OCI-LY7 (cell line): ENCODE measurements at regions of chr3 and their contacts with region 1.

Region 1: GRCh38 chr3:169772897-169773828 is at the start of gene MYNN:
- DNase-seq: peak; percentile 93
- H3K4me3 ChIP-seq: peak within 1 kb of the TSS; percentile 84
- H3K27ac ChIP-seq: peak within 1 kb of the TSS; percentile 92
- H3K4me1 ChIP-seq: peaks cover 31% of the 10 kb centered on the region
- CTCF ChIP-seq: peak; percentile 50
- total RNA-seq, gene MYNN: 12.0 and 13.1 TPM in 2 replicates

Region 2: DNA sequence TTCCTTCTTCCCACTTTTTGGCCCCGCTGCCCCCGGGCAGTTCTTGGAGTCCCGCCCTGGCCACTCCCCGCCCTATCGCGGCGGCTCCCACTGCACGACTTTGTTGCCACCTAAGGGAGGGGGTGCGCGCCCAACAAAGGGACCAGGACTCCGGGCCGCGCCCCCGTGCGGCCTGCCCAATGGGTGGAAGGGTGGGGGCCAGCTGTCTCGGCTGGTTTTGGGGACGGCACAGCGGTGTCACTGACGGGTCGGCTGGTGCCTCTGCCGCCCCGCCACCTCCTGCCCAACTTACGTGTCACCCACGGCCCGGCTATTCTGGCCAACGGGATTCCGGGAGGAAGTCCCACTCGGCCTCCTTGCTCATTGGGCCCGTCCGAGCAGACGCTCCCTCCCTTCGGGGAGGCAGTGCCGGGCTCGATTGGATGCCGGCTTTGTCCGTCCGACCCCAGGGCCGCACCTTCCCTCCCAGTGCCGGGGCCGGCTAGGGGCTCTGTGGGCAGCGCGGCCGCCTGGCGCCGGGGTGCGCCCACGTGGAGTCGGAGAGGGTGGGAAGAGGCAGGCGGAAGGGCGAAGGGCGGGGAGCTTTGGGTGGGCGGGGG is 1677.5 kb before region 1 on chr3 and contains the start of gene GOLIM4:
- CTCF ChIA-PET with region 1: no interaction called
- POLR2A ChIA-PET with region 1: no interaction called
- intact Hi-C with region 1: loop called (anchors 5 kb)
- DNase-seq: peak; percentile 96
- H3K4me3 ChIP-seq: peak within 1 kb of the TSS; percentile 80
- H3K27ac ChIP-seq: peak within 1 kb of the TSS; percentile 84
- H3K4me1 ChIP-seq: peaks cover 31% of the 10 kb centered on the region
- CTCF ChIP-seq: peak; percentile 45; the same call in 1 of the 2 replicates
- total RNA-seq, gene GOLIM4: 31.2 and 42.6 TPM in 2 replicates

Region 3: DNA sequence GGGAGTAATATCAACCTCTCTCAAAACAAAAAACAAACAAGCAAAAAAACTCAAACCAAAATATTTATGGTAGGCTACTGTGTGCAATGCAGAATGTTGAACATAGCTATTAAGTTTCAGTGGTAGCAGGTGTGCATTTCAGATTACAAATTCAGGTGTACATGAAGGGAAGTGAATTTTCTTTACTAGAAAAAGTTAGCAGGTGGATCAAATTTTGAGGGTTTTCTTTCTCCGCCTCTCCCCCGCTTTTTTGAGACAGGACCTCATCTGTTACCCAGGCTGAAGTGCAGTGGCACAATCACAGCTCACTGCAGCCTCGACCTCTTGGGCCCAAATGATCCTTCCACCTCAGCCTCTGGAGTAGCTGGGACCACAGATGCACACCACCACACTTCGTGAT is 1567.7 kb before region 1 on chr3:
- CTCF ChIA-PET with region 1: no interaction called
- POLR2A ChIA-PET with region 1: interaction called, 3 read pairs
- intact Hi-C with region 1: loop called (anchors 10 kb)
- DNase-seq: peak; percentile 50
- H3K4me3 ChIP-seq: peak overlapping the region; percentile 68
- H3K27ac ChIP-seq: peak overlapping the region; percentile 98
- H3K4me1 ChIP-seq: peaks cover 43% of the 10 kb centered on the region
- CTCF ChIP-seq: no peak

Region 4: DNA sequence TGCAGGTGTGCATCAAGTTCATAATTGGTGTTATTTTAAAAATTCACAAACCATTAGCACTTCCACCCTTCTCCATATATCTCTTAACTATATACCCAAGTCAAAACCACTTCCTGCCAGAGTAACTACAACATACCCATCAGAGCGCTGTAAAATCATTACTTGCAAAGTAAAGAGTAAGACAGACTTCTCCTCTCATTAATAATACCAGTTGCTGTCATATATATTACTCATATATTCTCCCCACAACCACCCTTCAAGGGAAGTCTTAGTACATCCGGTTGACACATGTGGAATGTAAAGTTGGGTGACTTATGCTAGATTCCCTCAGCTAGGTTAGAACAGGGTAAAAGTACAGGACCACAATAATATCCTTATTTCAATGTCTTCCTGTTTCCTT is 13.9 kb before region 1 on chr3:
- CTCF ChIA-PET with region 1: no interaction called
- POLR2A ChIA-PET with region 1: interaction called, 18 read pairs
- intact Hi-C with region 1: no loop called
- DNase-seq: peak; percentile 29
- H3K4me3 ChIP-seq: no peak overlapping the region
- H3K27ac ChIP-seq: peak overlapping the region; percentile 4
- H3K4me1 ChIP-seq: peaks cover 23% of the 10 kb centered on the region
- CTCF ChIP-seq: no peak

Region 5: DNA sequence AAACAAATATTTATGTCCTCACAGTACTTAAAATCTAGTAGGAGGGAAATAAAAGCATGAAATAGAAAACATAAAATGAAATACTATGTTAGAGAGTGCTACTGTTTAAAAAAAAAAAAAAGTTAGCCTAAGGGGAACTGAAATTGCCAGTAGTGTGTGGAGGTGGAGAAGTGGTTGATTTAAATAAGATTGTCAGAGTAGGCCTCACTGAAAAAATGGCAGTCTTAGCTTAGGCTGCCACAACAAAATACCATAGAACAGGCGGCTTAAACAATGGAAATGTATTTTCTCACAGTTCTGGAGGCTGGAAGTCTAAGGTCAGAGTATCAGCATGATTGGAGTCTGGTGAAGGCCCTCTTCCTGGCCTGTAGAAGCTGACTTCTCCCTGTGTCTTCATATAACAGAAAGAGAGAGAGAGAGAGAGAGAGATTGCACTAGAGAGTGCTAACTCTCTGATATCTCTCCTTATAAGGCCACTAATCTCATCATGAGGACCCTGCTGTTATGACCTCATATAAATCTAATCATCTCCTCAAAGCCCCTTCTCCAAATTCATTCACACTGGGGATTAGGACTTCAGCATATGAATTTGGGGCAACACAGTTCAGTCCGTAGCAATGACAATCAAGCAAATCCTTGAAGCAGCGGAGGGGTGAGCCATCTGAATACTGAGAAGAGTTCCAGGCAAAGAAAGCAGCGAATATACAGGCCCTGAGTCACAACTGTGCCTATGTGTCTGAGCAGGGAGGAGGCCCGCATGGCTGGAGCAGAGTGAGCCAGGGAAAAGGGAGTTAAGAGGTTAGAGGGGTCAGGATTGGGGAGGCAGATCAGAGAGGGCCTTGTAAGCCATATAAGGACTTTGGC is 63.1 kb after region 1 on chr3:
- CTCF ChIA-PET with region 1: no interaction called
- POLR2A ChIA-PET with region 1: interaction called, 4 read pairs
- intact Hi-C with region 1: loop called (anchors 5 kb)
- DNase-seq: peak; percentile 70
- H3K4me3 ChIP-seq: no peak overlapping the region
- H3K27ac ChIP-seq: peak overlapping the region; percentile 63
- H3K4me1 ChIP-seq: peaks cover 38% of the 10 kb centered on the region
- CTCF ChIP-seq: no peak

Region 6: GRCh38 chr3:169931747-169932520 is 158.8 kb after region 1 on chr3:
- CTCF ChIA-PET with region 1: no interaction called
- POLR2A ChIA-PET with region 1: no interaction called
- intact Hi-C with region 1: loop called (anchors 5 kb)
- DNase-seq: peak; percentile 94
- H3K4me3 ChIP-seq: peak overlapping the region; percentile 56
- H3K27ac ChIP-seq: peak overlapping the region; percentile 86
- H3K4me1 ChIP-seq: peaks cover 81% of the 10 kb centered on the region
- CTCF ChIP-seq: no peak

Region 7: DNA sequence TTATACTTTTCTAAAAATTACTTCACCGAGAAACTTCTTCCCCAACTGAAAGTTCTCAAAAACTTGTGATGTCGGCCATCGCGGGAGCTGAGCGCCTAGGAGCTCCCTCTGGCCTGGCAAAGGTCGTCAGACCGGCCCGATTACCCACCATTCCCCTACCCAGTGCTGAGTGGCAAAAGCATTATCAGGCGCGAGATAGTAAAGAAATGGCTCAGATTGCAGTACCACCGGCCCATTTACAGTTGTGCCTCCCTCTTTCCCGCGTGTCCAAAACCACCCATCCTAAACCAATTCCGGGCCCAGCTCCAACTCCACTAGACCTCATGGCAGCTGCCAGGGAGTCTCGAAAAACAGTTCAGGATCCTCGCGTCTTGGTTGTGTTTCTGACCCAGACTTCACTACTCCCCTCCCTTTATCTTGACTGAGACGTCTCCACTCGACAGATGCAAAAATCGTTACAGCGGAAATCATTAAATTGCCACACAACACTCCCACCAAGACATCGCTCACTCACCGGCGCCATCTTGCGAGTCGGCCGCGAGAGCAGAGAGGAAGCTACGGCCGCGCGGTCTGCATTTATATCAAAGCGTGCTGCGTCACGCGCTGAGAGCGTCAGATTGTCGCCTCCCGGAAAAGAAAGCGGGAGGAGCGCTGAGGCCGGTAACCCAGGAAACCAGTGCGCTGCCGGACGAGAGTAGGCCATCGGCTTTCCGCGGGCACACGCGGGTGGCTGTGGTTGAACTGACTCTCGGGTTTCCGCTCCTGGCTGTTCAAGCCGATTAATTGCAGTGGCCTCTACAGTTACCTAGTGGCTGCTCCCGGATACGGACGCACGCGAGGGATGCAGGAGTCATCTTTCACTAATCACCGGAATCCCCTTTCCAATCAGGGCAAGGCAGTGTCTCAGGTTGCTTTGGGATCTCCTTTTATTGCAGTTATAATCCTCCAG is 1096.8 kb after region 1 on chr3 and contains the start of gene RPL22L1:
- CTCF ChIA-PET with region 1: no interaction called
- POLR2A ChIA-PET with region 1: interaction called, 5 read pairs
- intact Hi-C with region 1: loop called (anchors 1 kb)
- DNase-seq: peak; percentile 97
- H3K4me3 ChIP-seq: peak within 1 kb of the TSS; percentile 97
- H3K27ac ChIP-seq: peak within 1 kb of the TSS; percentile 90
- H3K4me1 ChIP-seq: peaks cover 27% of the 10 kb centered on the region
- CTCF ChIP-seq: peak; percentile 31; the same call in 1 of the 2 replicates
- total RNA-seq, gene RPL22L1: 32.9 and 51.7 TPM in 2 replicates